GM12878 (cell line): ENCODE measurements at regions of chr6 and their contacts with region 1.

Region 1: GRCh38 chr6:130885392-130886192 is 58.4 kb downstream of the SMLR1 start:
- DNase-seq: peak; percentile 45
- ATAC-seq: peak; percentile 98
- H3K4me3 ChIP-seq: no peak overlapping the region
- H3K27ac ChIP-seq: no peak overlapping the region
- H3K4me1 ChIP-seq: no peaks in the 10 kb centered on the region
- H3K27me3 ChIP-seq: no peaks in the 10 kb centered on the region
- CTCF ChIP-seq: peak; percentile 76 to 92 (median 88)
- EP300 ChIP-seq: no peak
- POLR2A ChIP-seq: no peak
- RAD21 ChIP-seq: peak; percentile 99

Region 2: DNA sequence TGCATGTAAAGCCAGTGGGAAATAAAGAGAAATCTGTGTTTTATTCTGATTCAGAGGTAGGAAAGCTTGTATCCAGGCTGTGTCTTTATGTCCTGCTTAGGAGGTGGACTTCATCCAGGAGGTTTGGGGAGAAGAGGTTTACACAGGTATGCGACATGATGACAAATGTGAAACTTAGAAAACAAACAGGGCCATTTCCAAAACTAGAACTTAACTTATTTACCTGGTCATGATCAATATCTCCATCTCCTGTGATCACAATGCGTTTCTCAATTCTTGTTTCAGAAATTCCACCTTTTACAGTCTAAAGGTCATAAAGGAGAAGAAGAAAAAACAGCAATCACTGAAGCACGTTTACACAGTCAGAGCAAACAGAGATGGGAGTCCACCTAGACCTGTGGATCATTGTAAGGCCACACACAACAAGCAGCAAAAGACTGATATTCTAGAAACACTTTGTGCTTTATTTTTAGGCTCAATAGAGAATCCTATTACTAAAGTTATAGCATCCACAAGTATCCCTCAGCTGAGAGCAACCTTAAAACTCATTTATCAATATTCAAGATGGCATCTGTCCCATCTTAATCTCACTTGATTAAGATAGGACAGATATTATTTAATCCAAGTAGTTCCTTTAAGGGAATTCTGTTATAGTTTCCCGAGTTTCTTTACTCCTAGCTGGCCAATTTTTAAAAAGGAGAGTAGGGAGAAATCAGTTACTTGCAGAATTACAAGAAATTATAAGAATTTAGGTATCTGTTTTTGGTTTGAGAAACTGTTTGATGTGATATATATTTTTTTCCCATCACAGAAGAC is 22.0 kb before region 1 on chr6:
- CTCF ChIA-PET with region 1: interaction called, 10 read pairs
- POLR2A ChIA-PET with region 1: no interaction called
- RAD21 ChIA-PET with region 1: interaction called, 3 read pairs
- SMC1A ChIA-PET with region 1: interaction called, 3 read pairs
- in situ Hi-C with region 1: no loop called
- intact Hi-C with region 1: no loop called
- DNase-seq: no peak
- ATAC-seq: no peak
- H3K4me3 ChIP-seq: no peak overlapping the region
- H3K27ac ChIP-seq: no peak overlapping the region
- H3K4me1 ChIP-seq: no peaks in the 10 kb centered on the region
- H3K27me3 ChIP-seq: no peaks in the 10 kb centered on the region
- CTCF ChIP-seq: no peak
- EP300 ChIP-seq: no peak
- POLR2A ChIP-seq: no peak
- RAD21 ChIP-seq: no peak

Region 3: DNA sequence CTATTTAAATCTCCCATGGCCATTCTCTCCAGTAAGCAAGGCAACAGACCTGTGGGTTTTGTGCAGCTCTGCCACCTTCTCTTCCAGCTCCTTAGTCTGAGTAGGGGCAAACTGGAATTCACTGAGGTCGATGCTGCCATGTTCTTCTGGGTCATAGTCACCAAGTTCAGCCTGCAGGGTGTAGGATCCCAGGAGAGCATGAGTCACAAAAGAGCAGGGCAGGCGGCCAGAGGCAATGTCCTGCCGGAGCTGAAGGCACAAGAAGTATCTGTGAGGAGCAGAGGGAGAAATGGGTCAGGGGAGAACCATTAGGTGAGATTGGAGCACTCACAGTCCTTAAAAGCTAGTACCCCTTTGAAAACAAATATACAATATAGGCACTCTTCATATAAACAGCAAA is 15.3 kb after region 1 on chr6:
- CTCF ChIA-PET with region 1: interaction called, 17 read pairs
- POLR2A ChIA-PET with region 1: no interaction called
- RAD21 ChIA-PET with region 1: interaction called, 10 read pairs
- SMC1A ChIA-PET with region 1: interaction called, 8 read pairs
- in situ Hi-C with region 1: no loop called
- intact Hi-C with region 1: no loop called
- DNase-seq: no peak
- ATAC-seq: no peak
- H3K4me3 ChIP-seq: no peak overlapping the region
- H3K27ac ChIP-seq: no peak overlapping the region
- H3K4me1 ChIP-seq: no peaks in the 10 kb centered on the region
- H3K27me3 ChIP-seq: no peaks in the 10 kb centered on the region
- CTCF ChIP-seq: no peak
- EP300 ChIP-seq: no peak
- POLR2A ChIP-seq: no peak
- RAD21 ChIP-seq: no peak

Region 4: GRCh38 chr6:130913120-130913519 is 27.5 kb after region 1 on chr6:
- CTCF ChIA-PET with region 1: no interaction called
- POLR2A ChIA-PET with region 1: no interaction called
- RAD21 ChIA-PET with region 1: no interaction called
- SMC1A ChIA-PET with region 1: no interaction called
- in situ Hi-C with region 1: no loop called
- intact Hi-C with region 1: no loop called
- DNase-seq: peak; percentile 21
- ATAC-seq: peak; percentile 87
- H3K4me3 ChIP-seq: no peak overlapping the region
- H3K27ac ChIP-seq: no peak overlapping the region
- H3K4me1 ChIP-seq: peaks cover 6% of the 10 kb centered on the region
- H3K27me3 ChIP-seq: no peaks in the 10 kb centered on the region
- CTCF ChIP-seq: no peak
- EP300 ChIP-seq: no peak
- POLR2A ChIP-seq: no peak
- RAD21 ChIP-seq: no peak

Region 5: DNA sequence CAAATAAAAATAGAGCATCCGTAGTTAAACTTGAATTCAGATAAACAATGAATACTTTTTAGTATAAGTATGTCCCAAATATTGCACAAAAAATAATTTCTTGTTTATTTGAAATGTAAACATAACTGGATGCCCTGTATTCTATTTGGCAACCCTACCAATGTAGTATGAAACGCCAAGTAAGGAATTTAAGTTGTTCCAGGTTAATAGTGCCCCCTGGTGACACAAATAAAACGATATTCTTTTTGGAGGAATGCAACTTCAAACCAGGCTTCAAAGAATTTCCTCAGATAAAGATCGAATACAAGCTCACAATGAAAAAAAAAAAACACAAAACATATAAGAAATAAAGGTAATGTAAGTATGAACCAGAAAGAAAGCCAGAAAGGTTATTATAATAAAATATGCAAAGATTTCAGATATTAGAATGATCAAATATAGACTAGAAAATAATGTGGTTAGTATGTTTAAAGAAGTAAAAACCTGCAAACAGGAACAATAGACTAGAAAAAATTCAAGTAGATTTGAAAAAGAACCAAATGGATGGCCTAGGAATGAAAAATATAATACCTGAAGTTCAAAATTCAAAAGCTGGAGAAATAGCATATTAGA is 231.3 kb after region 1 on chr6:
- CTCF ChIA-PET with region 1: interaction called, 365 read pairs
- POLR2A ChIA-PET with region 1: interaction called, 3 read pairs
- RAD21 ChIA-PET with region 1: interaction called, 104 read pairs
- SMC1A ChIA-PET with region 1: interaction called, 301 read pairs
- in situ Hi-C with region 1: loop called (anchors 5 kb)
- intact Hi-C with region 1: loop called (anchors 1 kb)
- DNase-seq: no peak
- ATAC-seq: peak; percentile 83
- H3K4me3 ChIP-seq: no peak overlapping the region
- H3K27ac ChIP-seq: no peak overlapping the region
- H3K4me1 ChIP-seq: no peaks in the 10 kb centered on the region
- H3K27me3 ChIP-seq: no peaks in the 10 kb centered on the region
- CTCF ChIP-seq: peak; percentile 2 to 51 (median 31); a peak in 3 of 6 replicates
- EP300 ChIP-seq: no peak
- POLR2A ChIP-seq: no peak
- RAD21 ChIP-seq: peak; percentile 85

Region 6: GRCh38 chr6:131199568-131200272 is 314.1 kb after region 1 on chr6:
- CTCF ChIA-PET with region 1: interaction called, 14 read pairs
- POLR2A ChIA-PET with region 1: no interaction called
- RAD21 ChIA-PET with region 1: interaction called, 5 read pairs
- SMC1A ChIA-PET with region 1: no interaction called
- in situ Hi-C with region 1: no loop called
- intact Hi-C with region 1: no loop called
- DNase-seq: peak; percentile 71
- ATAC-seq: peak; percentile 100
- H3K4me3 ChIP-seq: no peak overlapping the region
- H3K27ac ChIP-seq: peak overlapping the region; percentile 15; the same call in 1 of the 2 replicates
- H3K4me1 ChIP-seq: peaks cover 9% of the 10 kb centered on the region
- H3K27me3 ChIP-seq: no peaks in the 10 kb centered on the region
- CTCF ChIP-seq: peak; percentile 84 to 89 (median 89)
- EP300 ChIP-seq: no peak
- POLR2A ChIP-seq: no peak
- RAD21 ChIP-seq: peak; percentile 90

Region 7: GRCh38 chr6:131627724-131628682 is 742.4 kb after region 1 on chr6 and contains the start of gene MED23:
- CTCF ChIA-PET with region 1: interaction called, 17 read pairs
- POLR2A ChIA-PET with region 1: no interaction called
- RAD21 ChIA-PET with region 1: no interaction called
- SMC1A ChIA-PET with region 1: interaction called, 7 read pairs
- in situ Hi-C with region 1: no loop called
- intact Hi-C with region 1: no loop called
- DNase-seq: peak; percentile 80
- ATAC-seq: peak; percentile 96
- H3K4me3 ChIP-seq: peak within 1 kb of the TSS; percentile 89
- H3K27ac ChIP-seq: peak within 1 kb of the TSS; percentile 54
- H3K4me1 ChIP-seq: no peaks in the 10 kb centered on the region
- H3K27me3 ChIP-seq: no peaks in the 10 kb centered on the region
- CTCF ChIP-seq: peak; percentile 99 to 100 (median 100); a peak in 5 of 6 replicates
- EP300 ChIP-seq: peak in 1 of 2 experiments; percentile 52; a peak in 1 of 4 replicates
- POLR2A ChIP-seq: peak; percentile 87
- RAD21 ChIP-seq: peak; percentile 81
- polyA plus RNA-seq, gene MED23: 7.1 to 9.0 TPM